ENCODE measurements at regions of chr1 and their contacts with region 1.

Region 1: DNA sequence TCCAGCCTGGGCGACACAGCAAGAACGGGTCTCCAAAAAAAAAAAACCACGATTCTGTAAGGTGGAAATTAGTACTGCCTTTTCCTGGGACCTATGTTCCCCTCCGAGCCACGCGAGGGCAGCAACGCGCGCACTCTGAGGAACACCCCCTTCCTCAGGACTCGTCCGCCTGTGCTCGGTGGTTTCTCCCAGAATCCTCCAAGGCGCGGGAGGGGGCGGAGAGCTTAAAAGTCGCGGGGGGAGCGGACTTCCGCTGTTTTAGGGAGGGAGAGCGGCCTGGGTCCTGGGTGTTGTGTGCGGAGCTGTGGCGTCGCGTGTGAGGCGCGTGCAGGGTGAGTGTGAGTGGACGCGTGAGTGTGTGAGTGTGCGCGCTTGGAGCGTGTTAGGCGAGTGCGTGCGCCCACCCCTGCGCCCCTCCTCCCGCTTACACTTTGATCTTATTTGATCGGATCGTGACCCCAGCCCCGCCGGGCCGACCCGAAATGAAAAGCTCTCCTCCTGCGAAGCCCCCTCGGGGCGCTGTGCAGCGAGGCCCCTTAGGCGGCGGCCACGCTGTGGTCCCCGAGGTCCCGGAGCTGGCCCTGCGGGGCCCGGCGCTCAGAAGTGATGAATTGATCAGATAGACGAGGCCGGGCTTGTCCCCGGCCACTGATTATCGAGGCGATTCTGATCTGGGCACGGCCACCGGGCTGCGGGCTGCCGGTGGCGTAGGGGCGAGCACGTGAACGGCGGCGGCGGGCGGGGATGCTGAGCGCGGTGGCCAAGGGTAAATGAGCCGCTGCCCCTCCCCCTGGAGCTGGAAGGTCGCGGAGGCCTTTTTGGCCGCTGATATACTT is 9.6 kb downstream of the TMEM167B start:
- H3K4me3 Mint-ChIP-seq: peak overlapping the region; percentile 93
- H3K27ac Mint-ChIP-seq: peak overlapping the region; percentile 90
- H3K4me1 Mint-ChIP-seq: no peaks in the 10 kb centered on the region
- H3K27me3 Mint-ChIP-seq: no peaks in the 10 kb centered on the region

Region 2: DNA sequence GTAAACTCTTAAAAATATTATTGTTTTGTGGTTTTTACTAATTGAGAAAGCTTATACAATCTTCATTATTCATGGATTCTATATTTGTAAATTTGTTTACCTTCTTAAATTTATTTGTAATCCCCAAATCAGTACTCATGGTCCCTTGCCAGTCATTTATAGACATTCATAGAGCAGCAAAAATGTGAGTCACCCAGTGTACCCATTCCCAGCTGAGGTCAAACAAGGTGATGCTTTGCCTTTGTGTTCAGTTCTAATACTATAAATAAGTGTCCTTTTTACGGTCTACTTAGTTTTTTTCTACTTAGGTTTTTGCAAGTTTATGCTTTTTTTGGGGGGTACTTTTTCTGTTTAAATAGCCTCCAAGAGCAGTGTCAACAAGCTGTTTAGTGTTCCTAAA is 261.5 kb after region 1 on chr1:
- intact Hi-C with region 1: loop called (anchors 10 kb)
- H3K4me3 Mint-ChIP-seq: no peak overlapping the region
- H3K27ac Mint-ChIP-seq: peak overlapping the region; percentile 78
- H3K4me1 Mint-ChIP-seq: peaks cover 36% of the 10 kb centered on the region
- H3K27me3 Mint-ChIP-seq: no peaks in the 10 kb centered on the region

Region 3: DNA sequence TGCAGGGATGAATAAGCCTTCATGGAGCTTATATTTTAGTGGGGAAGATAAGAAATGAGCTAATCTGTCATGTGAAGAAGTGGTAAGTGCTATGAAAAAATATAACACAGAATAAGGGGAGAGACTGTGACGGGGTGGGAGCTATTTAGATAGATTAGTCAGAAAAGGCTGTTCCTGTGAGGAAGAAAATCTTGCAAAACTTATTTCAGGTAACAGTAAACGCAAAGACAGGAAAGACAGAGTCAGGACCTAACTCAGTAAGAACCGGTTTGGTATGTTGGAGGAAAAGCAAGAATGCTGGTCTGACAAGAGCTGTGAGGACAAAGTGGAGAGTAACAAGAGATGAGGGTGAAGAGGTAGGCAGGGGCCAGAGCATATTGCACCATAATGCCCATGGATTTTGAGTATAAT is 470.3 kb after region 1 on chr1:
- intact Hi-C with region 1: no loop called
- H3K4me3 Mint-ChIP-seq: no peak overlapping the region
- H3K27ac Mint-ChIP-seq: no peak overlapping the region
- H3K4me1 Mint-ChIP-seq: peaks cover 33% of the 10 kb centered on the region
- H3K27me3 Mint-ChIP-seq: no peaks in the 10 kb centered on the region

Measured in dendritic cell treated with granulocyte-macrophage colony-stimulating factor and Interleukin-4, amounts not matched to agents 40 ng/mL and 50 ng/mL, for 4 days (primary cell).